Mammary epithelial cell (primary cell): ENCODE measurements at regions of chr7 and their contacts with region 1.

Region 1: DNA sequence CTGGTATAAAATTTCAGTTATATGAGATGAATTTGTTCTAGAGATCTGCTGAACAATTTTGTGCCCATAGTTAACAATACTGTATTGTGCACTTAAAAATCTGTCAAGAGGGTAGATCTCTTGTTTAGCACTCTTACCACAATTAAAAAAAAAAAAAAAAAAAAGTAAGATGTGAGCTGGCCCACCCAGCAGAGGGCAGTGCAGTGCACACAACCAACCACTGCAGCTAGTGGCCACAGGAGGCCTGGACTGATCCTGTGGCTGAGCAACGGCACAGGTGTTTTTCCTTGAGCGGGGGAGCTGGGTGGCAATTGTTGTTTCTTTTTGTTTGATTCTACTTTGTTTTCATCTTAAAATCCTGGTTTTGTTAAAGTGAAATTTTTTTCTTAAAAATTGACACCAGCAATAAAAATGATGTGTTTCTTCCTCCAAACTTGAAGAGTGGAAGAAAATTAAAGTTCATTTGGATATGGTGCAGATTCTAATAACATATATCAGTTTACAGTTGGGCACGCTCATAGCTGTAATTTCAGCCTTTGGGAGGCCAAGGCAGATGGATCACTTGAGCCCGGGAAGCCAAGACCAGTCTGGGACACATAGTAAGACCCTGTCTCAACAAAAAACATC is 171.1 kb upstream of the TBX20 start:
- DNase-seq: peak; percentile 30
- H3K4me3 ChIP-seq: no peak overlapping the region
- H3K27ac ChIP-seq: no peak overlapping the region
- H3K4me1 ChIP-seq: no peaks in the 10 kb centered on the region
- H3K27me3 ChIP-seq: peaks cover 3% of the 10 kb centered on the region
- CTCF ChIP-seq: peak; percentile 64 to 82

Region 2: DNA sequence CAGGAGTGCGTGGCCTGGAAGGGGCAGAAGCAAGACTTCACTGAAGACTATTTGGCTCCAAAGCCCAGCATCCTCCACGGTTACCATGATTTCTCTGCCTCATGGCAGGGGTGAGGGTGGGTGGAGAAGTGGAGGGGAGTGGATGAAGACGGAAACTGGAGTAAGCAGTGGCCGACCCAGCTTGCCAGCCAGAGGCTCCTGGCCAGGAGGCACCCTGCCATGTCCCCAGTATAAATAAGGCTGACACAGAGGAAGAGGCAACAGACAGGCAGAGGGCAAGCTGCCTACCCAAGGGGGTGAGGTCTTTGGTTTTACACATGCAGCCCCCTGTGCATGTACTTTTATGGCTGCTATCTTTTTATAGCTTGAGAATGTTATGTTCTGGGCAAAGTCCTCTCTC is 68.5 kb before region 1 on chr7:
- CTCF ChIA-PET with region 1: no interaction called
- dilution Hi-C with region 1: no loop called
- in situ Hi-C with region 1: no loop called
- intact Hi-C with region 1: no loop called
- DNase-seq: no peak
- H3K4me3 ChIP-seq: no peak overlapping the region
- H3K27ac ChIP-seq: no peak overlapping the region
- H3K4me1 ChIP-seq: no peaks in the 10 kb centered on the region
- H3K27me3 ChIP-seq: no peaks in the 10 kb centered on the region
- CTCF ChIP-seq: no peak

Region 3: DNA sequence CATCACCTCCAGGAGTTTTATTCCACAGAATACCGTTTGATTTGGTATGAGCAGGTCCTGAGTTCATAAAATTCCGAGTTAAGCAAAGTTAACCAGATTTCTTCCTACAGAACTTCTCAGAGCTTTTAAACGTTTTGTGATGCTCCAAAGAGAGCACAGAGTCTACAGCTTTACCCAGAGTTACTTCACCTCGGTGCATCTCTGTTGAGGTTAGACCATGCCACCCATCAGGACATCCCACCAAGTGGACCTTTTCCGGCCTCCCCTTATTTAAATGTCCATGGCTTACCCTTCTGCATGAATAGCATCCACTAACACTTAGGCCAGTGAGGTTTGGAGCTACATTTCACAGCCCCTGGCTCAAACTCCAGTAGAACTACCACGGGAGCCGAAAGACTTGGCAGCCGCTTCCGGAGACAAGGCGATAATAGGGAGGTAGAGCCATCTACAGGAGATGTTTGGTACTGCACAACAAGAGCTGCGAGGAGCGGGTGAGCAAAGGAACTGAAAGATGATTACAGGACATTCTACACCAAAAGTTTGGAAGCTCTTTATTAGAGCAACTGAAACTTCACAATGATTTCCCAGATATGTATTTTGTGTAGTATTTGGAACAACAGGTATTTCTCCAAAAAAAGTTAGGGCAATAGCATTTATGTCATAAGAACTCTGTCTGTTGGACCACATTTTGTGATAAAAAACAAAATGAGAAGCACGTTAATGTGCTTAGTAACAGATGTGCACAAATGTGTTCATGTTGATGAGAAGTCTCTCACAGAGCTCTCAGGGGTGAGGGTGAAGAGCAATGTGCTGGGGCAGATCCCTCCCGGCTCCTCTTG is 95.2 kb after region 1 on chr7:
- CTCF ChIA-PET with region 1: interaction called, 3 read pairs
- dilution Hi-C with region 1: no loop called
- in situ Hi-C with region 1: no loop called
- intact Hi-C with region 1: loop called (anchors 1 kb)
- DNase-seq: peak; percentile 42
- H3K4me3 ChIP-seq: no peak overlapping the region
- H3K27ac ChIP-seq: no peak overlapping the region
- H3K4me1 ChIP-seq: no peaks in the 10 kb centered on the region
- H3K27me3 ChIP-seq: no peaks in the 10 kb centered on the region
- CTCF ChIP-seq: peak; percentile 89 to 93

Region 4: GRCh38 chr7:35537067-35538023 is 112.4 kb after region 1 on chr7:
- CTCF ChIA-PET with region 1: no interaction called
- dilution Hi-C with region 1: no loop called
- in situ Hi-C with region 1: loop called in 1 of 2 experiments (anchors 10 kb)
- intact Hi-C with region 1: loop called (anchors 1 kb)
- DNase-seq: peak; percentile 53
- H3K4me3 ChIP-seq: peak overlapping the region in 1 of 3 experiments; percentile 35
- H3K27ac ChIP-seq: no peak overlapping the region
- H3K4me1 ChIP-seq: no peaks in the 10 kb centered on the region
- H3K27me3 ChIP-seq: no peaks in the 10 kb centered on the region
- CTCF ChIP-seq: peak; percentile 88 to 96

Region 5: DNA sequence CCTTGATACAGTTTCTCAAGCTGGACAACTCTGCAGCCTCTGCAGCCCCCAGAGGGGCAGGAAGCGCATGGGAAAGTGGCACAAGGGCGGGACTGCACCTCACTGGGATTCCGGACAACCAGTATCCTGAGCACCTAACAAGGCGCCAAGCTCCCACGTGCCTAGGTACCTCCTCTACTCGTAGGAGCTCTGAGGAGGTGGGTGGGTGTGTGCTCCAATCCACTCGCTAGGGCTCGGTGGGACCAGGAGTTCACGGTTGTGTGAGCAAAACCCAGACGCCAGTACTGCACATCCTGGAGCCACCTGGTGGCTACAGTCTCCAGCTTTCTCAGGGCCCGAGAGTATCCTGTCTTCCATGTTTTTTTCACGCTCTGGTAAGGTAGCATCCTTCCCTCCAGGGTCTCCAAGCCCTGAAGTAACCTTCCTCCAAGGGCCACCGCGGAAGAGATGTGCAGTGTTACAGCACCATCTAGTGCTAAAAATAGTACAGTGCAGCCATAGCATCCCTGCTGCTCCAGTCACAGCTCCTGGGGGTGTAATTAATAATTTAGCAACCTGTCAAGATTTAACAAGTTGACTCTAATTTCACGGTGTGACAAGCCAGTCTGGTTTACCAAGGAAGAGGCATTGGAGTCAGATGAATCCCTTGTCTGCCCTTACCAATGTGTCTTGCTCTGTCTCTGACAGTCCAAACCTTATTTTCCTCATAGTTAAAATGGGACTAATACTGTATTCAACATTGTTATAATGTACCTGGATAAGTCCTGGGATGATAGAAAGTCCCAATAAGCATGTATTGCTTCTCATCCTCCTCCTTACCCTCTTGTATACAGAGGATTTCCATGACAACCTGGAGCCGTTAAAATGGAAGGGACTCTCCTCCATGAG is 199.6 kb after region 1 on chr7:
- CTCF ChIA-PET with region 1: no interaction called
- dilution Hi-C with region 1: no loop called
- in situ Hi-C with region 1: no loop called
- intact Hi-C with region 1: loop called (anchors 1 kb)
- DNase-seq: peak; percentile 19
- H3K4me3 ChIP-seq: no peak overlapping the region
- H3K27ac ChIP-seq: no peak overlapping the region
- H3K4me1 ChIP-seq: no peaks in the 10 kb centered on the region
- H3K27me3 ChIP-seq: no peaks in the 10 kb centered on the region
- CTCF ChIP-seq: peak; percentile 82 to 84

Region 6: GRCh38 chr7:35831208-35831607 is 406.2 kb after region 1 on chr7:
- CTCF ChIA-PET with region 1: interaction called, 12 read pairs
- dilution Hi-C with region 1: no loop called
- in situ Hi-C with region 1: no loop called
- intact Hi-C with region 1: no loop called
- DNase-seq: no peak
- H3K4me3 ChIP-seq: no peak overlapping the region
- H3K27ac ChIP-seq: no peak overlapping the region
- H3K4me1 ChIP-seq: peaks cover 16% of the 10 kb centered on the region
- H3K27me3 ChIP-seq: no peaks in the 10 kb centered on the region
- CTCF ChIP-seq: no peak

Region 7: DNA sequence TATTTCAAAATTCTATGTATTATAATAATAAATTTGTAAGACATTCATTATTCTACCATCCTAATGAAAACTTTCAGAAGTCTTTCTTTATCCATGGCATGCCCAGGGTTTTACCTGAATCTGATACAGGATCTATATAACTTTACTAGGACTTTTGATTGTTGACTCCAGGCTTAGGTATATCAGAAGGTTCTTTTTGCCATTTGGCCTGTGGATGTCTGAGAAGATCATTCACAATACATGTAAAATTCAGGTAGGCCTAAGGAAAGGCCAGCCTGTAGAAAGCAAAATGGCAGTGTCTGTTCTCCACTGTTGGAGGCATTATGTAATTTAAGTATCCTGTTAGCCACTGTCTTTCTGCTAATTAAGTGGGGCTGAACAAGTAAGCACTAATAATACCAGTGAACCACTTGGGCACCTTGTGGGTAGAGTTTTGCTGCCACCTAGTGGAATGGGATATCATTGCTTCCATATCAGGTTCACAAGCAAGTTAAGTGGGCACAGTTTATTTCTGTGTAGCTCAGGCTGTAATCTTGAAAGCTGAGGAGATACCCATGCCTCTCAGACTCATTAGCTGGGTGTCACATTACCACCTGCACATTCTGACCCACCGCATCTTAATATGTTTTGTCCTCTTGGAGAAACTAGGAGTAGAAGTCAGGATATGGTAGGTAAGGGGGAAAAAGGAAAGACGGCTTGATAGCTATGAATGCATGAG is 481.4 kb after region 1 on chr7:
- CTCF ChIA-PET with region 1: no interaction called
- dilution Hi-C with region 1: no loop called
- in situ Hi-C with region 1: no loop called
- intact Hi-C with region 1: loop called (anchors 1 kb)
- DNase-seq: peak; percentile 54
- H3K4me3 ChIP-seq: no peak overlapping the region
- H3K27ac ChIP-seq: no peak overlapping the region
- H3K4me1 ChIP-seq: peaks cover 10% of the 10 kb centered on the region
- H3K27me3 ChIP-seq: no peaks in the 10 kb centered on the region
- CTCF ChIP-seq: peak; percentile 88 to 90

Region 8: DNA sequence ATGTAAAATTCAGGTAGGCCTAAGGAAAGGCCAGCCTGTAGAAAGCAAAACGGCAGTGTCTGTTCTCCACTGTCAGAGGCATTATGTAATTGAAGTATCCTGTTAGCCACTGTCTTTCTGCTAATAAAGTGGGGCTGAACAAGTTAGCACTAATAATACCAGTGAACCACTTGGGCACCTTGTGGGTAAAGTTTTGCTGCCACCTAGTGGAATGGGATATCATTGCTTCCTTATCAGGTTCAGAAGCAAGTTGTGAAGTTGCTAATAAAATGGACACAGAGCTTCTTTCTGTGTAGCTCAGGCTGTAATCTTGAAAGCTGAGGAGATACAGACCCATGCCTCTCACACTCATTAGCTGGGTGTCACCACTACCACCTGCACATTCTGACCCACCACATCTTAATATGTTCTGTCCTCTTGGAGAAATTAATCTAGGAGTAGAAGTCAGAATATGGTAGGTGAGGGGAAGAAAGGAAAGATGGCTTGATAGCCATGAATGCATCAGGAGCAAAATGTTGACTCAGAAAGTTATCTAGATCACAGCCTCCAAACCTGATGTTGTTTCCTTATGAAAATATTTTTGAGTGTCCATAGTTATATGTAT is 551.0 kb after region 1 on chr7:
- CTCF ChIA-PET with region 1: no interaction called
- dilution Hi-C with region 1: no loop called
- in situ Hi-C with region 1: no loop called
- intact Hi-C with region 1: loop called (anchors 10 kb)
- DNase-seq: peak; percentile 59
- H3K4me3 ChIP-seq: no peak overlapping the region
- H3K27ac ChIP-seq: no peak overlapping the region
- H3K4me1 ChIP-seq: peaks cover 4% of the 10 kb centered on the region
- H3K27me3 ChIP-seq: peaks cover 15% of the 10 kb centered on the region
- CTCF ChIP-seq: peak; percentile 86 to 87